PC-9 (cell line): ENCODE measurements at regions of chrX and their contacts with region 1.

Region 1: DNA sequence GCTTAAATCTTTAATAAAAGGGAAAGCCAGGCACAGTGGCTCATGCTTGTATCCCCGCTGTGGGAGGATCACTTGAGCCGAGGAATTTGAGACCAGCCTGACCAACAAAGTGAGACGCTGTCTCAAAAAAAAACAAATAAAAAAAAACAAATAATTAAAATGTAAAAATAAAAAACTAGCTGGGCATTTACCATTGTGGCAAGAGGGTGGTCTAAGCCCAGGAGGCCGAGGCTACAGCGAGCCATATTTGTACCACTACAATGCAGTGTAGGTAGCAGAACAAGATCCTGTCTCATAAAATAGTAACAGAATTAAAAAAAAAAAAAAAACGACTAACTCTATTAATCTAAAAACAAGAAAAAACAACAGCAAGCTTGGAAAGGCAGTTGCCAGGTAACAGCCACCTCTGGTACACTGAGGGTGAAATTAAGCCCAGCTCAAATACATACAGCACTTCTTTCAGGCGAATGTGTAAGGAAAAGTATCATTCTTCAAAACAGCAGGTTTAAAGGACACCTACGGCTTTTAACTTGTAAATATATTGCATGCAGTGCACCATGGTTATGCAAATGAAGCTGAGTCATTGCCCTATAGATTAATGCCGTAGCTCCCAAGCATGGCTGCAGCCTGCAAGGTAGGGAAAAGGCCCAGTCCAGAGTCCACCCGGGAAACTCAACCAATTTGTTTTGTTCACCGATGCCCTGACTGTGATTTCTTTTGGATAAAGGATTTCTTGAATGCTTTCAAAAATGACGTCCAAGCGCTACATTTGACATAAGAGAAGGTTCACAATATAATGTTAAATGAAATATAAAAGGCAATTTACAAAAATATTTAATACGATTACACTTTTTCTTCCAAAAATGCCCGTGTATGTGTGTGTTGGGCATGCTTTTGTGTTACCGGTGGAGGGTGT is 14.5 kb upstream of the TXLNG start:
- DNase-seq: peak; percentile 39 to 82
- H3K4me3 ChIP-seq: peak overlapping the region; percentile 38; the same call in 1 of the 2 replicates
- H3K27ac ChIP-seq: peak overlapping the region; percentile 98
- H3K4me1 ChIP-seq: peaks cover 16% of the 10 kb centered on the region
- H3K27me3 ChIP-seq: no peaks in the 10 kb centered on the region
- CTCF ChIP-seq: no peak

Region 2: DNA sequence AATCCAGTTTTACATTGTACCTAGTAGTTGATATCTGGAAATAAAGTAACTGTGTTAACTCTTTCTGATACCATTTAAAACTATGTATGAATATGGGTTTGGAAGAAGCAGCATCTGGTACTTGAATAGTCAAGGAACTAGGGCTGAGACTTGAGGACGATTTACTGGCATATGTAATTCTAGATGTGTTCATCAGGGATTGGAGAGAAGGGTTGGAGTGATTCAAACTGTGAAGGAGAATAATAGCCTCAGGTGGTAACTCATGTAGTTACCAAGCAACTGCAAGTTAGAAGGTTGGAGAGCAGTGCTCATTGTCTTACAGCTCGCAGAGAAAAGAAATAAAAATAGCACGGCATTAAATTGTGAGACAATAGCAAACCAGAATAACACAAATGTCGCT is 15.0 kb before region 1 on chrX:
- CTCF ChIA-PET with region 1: no interaction called
- POLR2A ChIA-PET with region 1: no interaction called
- intact Hi-C with region 1: no loop called
- DNase-seq: no peak
- H3K4me3 ChIP-seq: no peak overlapping the region
- H3K27ac ChIP-seq: no peak overlapping the region
- H3K4me1 ChIP-seq: no peaks in the 10 kb centered on the region
- H3K27me3 ChIP-seq: no peaks in the 10 kb centered on the region
- CTCF ChIP-seq: no peak

Region 3: GRCh38 chrX:16786139-16786790 is 14.5 kb after region 1 on chrX and contains the start of gene TXLNG:
- CTCF ChIA-PET with region 1: no interaction called
- POLR2A ChIA-PET with region 1: no interaction called
- intact Hi-C with region 1: loop called (anchors 1 kb)
- DNase-seq: peak; percentile 96 to 97
- H3K4me3 ChIP-seq: peak within 1 kb of the TSS; percentile 80
- H3K27ac ChIP-seq: peak within 1 kb of the TSS; percentile 63
- H3K4me1 ChIP-seq: 0 out of 2 replicates have a peak, but pooled peaks cover 5% of the 10 kb centered on the region
- H3K27me3 ChIP-seq: no peaks in the 10 kb centered on the region
- CTCF ChIP-seq: no peak
- total RNA-seq, gene TXLNG: 12.6 and 17.4 TPM in 2 replicates